Natural killer cell (primary cell): ENCODE measurements at regions of chr6 and their contacts with region 1.

Region 1: DNA sequence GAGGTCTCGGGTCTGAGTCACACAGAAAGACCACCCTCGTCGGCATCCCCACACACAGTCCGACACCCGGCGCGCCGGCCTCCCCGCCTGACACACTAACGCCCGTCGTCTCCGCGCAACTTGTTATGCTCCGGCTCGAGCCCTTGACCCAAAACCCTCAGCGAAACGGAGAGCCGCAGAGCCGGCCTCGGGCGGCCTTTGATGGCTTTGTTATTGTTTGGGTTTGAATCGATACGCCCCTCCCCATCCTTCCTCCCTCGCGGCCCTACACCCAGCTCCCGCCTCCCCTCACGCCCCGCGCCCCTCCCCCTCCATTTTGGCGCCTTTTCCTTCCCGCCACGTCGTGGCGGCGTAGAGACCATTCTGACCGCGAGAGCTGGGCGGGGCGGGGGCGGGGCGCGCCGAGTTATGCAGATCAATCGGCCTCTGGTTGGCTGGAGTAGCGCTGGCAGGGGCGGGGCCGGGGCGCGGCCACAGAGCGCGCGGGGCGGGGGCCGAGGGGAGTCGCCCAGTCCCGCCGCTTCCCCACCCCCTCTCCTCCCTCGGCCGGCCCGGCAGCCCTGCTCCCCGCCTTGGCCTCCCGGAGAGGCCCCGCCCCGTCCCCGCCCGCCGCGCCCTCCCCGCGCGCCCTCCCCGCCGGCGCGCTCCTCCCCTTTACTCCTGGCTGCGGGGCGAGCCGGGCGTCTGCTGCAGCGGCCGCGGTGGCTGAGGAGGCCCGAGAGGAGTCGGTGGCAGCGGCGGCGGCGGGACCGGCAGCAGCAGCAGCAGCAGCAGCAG is at the start of gene PIM1:
- DNase-seq: peak; percentile 90 to 98
- ATAC-seq: peak; percentile 79 to 95 (median 85)
- H3K4me3 ChIP-seq: peak within 1 kb of the TSS; percentile 92
- H3K4me3 Mint-ChIP-seq: peak within 1 kb of the TSS; percentile 99
- H3K27ac ChIP-seq: peak within 1 kb of the TSS; percentile 75
- H3K27ac Mint-ChIP-seq: peak within 1 kb of the TSS; percentile 95 to 99
- H3K4me1 ChIP-seq: peaks cover 39% of the 10 kb centered on the region
- H3K4me1 Mint-ChIP-seq: peaks cover 41 to 47% of the 10 kb centered on the region in 2 donors
- H3K27me3 ChIP-seq: no peaks in the 10 kb centered on the region
- H3K27me3 Mint-ChIP-seq: no peaks in the 10 kb centered on the region
- CTCF ChIP-seq: no peak
- total RNA-seq, gene PIM1: 188 to 242 (median 215) TPM

Region 2: DNA sequence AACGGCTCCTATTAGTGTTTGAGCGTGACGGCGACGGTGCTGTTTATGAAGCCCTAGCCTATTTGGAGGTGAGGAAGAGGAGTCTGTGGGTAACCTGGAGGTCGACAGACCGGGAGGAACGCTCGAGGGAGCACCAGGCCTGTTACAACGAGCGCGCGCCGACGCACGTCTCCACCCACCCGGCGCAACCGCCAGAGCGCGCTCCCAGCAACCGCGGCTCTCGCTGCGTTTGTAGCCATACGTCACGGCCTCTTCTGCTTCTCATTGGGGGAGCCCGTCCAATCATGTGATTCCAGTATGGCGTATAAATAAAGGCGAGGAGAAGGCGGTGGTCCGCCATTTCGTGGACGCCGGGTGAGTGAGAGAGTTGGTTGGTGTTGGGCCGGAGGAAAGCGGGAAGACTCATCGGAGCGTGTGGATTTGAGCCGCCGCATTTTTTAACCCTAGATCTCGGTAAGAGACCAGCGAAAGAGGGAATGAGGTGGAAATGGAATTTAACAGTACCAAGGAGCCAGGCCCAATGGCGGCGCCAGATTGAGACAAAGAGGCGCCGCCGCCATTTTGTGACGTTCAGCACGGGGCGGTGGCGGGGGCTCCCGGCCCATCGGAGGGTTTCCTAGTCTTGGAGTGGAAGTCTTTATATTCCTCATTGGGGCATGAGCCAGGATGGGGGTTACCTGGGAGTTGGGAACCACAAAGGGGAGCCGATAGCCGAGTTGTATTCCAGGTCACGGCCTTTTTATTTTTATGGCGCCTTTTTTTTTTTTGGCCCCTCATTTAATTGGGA is 575.5 kb before region 1 on chr6 and contains the start of gene SRSF3:
- intact Hi-C with region 1: loop called (anchors 10 kb)
- DNase-seq: peak; percentile 95 to 99
- ATAC-seq: peak; percentile 80 to 96 (median 87)
- H3K4me3 ChIP-seq: peak within 1 kb of the TSS; percentile 82
- H3K4me3 Mint-ChIP-seq: peak within 1 kb of the TSS; percentile 94
- H3K27ac ChIP-seq: peak within 1 kb of the TSS; percentile 98
- H3K27ac Mint-ChIP-seq: peak within 1 kb of the TSS; percentile 97 to 99
- H3K4me1 ChIP-seq: peaks cover 52% of the 10 kb centered on the region
- H3K4me1 Mint-ChIP-seq: peaks cover 59 to 60% of the 10 kb centered on the region in 2 donors
- H3K27me3 ChIP-seq: no peaks in the 10 kb centered on the region
- H3K27me3 Mint-ChIP-seq: peaks cover 0 to 2% of the 10 kb centered on the region in 2 donors
- CTCF ChIP-seq: no peak
- total RNA-seq, gene SRSF3: 445 to 526 (median 447) TPM

Region 3: GRCh38 chr6:36885461-36886401 is 284.0 kb before region 1 on chr6 and contains the start of gene C6orf89:
- intact Hi-C with region 1: loop called (anchors 1 kb)
- DNase-seq: peak; percentile 93 to 99
- ATAC-seq: peak; percentile 97 to 100 (median 98)
- H3K4me3 ChIP-seq: peak within 1 kb of the TSS; percentile 77
- H3K4me3 Mint-ChIP-seq: peak within 1 kb of the TSS; percentile 93
- H3K27ac ChIP-seq: peak within 1 kb of the TSS; percentile 73
- H3K27ac Mint-ChIP-seq: peak within 1 kb of the TSS; percentile 89 to 91
- H3K4me1 ChIP-seq: peaks cover 7% of the 10 kb centered on the region
- H3K4me1 Mint-ChIP-seq: peaks cover 28 to 33% of the 10 kb centered on the region in 2 donors
- H3K27me3 ChIP-seq: no peaks in the 10 kb centered on the region
- H3K27me3 Mint-ChIP-seq: no peaks in the 10 kb centered on the region
- CTCF ChIP-seq: peak; percentile 79
- total RNA-seq, gene C6orf89: 34.3 to 47.0 (median 46.3) TPM

Region 4: DNA sequence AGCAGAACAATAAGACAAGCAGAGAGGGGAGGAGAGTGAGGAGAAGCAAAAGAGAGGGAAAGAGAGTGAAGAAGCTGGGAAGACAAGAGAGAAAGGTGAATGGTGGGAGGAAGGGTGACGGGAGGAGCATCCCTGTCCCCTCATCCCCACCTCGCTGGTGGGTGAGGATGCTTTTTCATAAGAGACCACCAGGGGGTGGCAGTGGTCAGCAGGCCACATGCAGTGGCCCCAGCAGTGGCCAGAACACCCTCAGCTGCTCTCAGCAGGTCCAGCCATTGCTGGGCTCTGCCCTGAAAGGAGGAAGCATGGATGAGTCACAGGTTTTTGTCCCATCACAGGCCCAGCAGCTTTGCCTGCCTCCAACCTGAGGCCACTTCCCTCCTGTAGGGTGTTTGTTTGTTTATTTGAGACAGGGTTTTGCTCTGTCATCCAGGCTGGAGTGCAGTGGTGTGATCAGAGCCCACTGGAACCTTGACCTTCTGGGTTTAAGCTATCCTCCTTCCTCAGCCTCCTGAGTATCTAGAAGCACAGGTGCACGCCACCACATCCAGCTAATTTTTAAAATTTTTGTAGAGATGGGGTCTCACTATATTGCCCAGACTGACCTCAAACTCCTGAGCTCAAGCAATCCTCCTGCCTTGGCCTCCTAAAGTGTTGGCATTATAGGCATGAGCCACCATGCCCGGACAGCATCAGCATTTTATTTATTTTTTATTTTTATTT is 140.3 kb before region 1 on chr6:
- intact Hi-C with region 1: loop called (anchors 1 kb)
- DNase-seq: peak; percentile 56 to 71
- ATAC-seq: peak; percentile 56 to 94 (median 63)
- H3K4me3 ChIP-seq: no peak overlapping the region
- H3K4me3 Mint-ChIP-seq: no peak overlapping the region
- H3K27ac ChIP-seq: no peak overlapping the region
- H3K27ac Mint-ChIP-seq: peak overlapping the region; percentile 63 to 71
- H3K4me1 ChIP-seq: peaks cover 59% of the 10 kb centered on the region
- H3K4me1 Mint-ChIP-seq: peaks cover 45 to 63% of the 10 kb centered on the region in 2 donors
- H3K27me3 ChIP-seq: no peaks in the 10 kb centered on the region
- H3K27me3 Mint-ChIP-seq: no peaks in the 10 kb centered on the region
- CTCF ChIP-seq: peak; percentile 78

Region 5: GRCh38 chr6:37051138-37052026 is 118.3 kb before region 1 on chr6:
- intact Hi-C with region 1: loop called (anchors 1 kb)
- DNase-seq: peak; percentile 88 to 94
- ATAC-seq: peak; percentile 53 to 80 (median 73)
- H3K4me3 ChIP-seq: no peak overlapping the region
- H3K4me3 Mint-ChIP-seq: peak overlapping the region; percentile 84
- H3K27ac ChIP-seq: peak overlapping the region; percentile 99
- H3K27ac Mint-ChIP-seq: peak overlapping the region; percentile 99 to 100
- H3K4me1 ChIP-seq: peaks cover 61% of the 10 kb centered on the region
- H3K4me1 Mint-ChIP-seq: peaks cover 60 to 63% of the 10 kb centered on the region in 2 donors
- H3K27me3 ChIP-seq: no peaks in the 10 kb centered on the region
- H3K27me3 Mint-ChIP-seq: no peaks in the 10 kb centered on the region
- CTCF ChIP-seq: peak; percentile 85

Region 6: GRCh38 chr6:37102279-37103168 is 67.2 kb before region 1 on chr6:
- intact Hi-C with region 1: loop called (anchors 5 kb)
- DNase-seq: peak; percentile 71 to 89
- ATAC-seq: peak; percentile 89 to 93 (median 93)
- H3K4me3 ChIP-seq: peak overlapping the region; percentile 29
- H3K4me3 Mint-ChIP-seq: peak overlapping the region; percentile 81
- H3K27ac ChIP-seq: peak overlapping the region; percentile 64
- H3K27ac Mint-ChIP-seq: peak overlapping the region; percentile 80 to 91
- H3K4me1 ChIP-seq: peaks cover 23% of the 10 kb centered on the region
- H3K4me1 Mint-ChIP-seq: peaks cover 22 to 25% of the 10 kb centered on the region in 2 donors
- H3K27me3 ChIP-seq: no peaks in the 10 kb centered on the region
- H3K27me3 Mint-ChIP-seq: no peaks in the 10 kb centered on the region
- CTCF ChIP-seq: no peak

Region 7: GRCh38 chr6:37207903-37208456 is 38.3 kb after region 1 on chr6:
- intact Hi-C with region 1: loop called (anchors 1 kb)
- DNase-seq: peak; percentile 83 to 91
- ATAC-seq: peak; percentile 91
- H3K4me3 ChIP-seq: no peak overlapping the region
- H3K4me3 Mint-ChIP-seq: peak overlapping the region; percentile 28
- H3K27ac ChIP-seq: peak overlapping the region; percentile 37
- H3K27ac Mint-ChIP-seq: peak overlapping the region; percentile 59 to 82
- H3K4me1 ChIP-seq: peaks cover 50% of the 10 kb centered on the region
- H3K4me1 Mint-ChIP-seq: peaks cover 51 to 54% of the 10 kb centered on the region in 2 donors
- H3K27me3 ChIP-seq: no peaks in the 10 kb centered on the region
- H3K27me3 Mint-ChIP-seq: no peaks in the 10 kb centered on the region
- CTCF ChIP-seq: peak; percentile 92

Region 8: GRCh38 chr6:37456816-37457560 is 287.3 kb after region 1 on chr6:
- intact Hi-C with region 1: no loop called
- DNase-seq: no peak
- ATAC-seq: no peak
- H3K4me3 ChIP-seq: no peak overlapping the region
- H3K4me3 Mint-ChIP-seq: no peak overlapping the region
- H3K27ac ChIP-seq: no peak overlapping the region
- H3K27ac Mint-ChIP-seq: no peak overlapping the region
- H3K4me1 ChIP-seq: no peaks in the 10 kb centered on the region
- H3K4me1 Mint-ChIP-seq: peaks cover 15 to 22% of the 10 kb centered on the region in 2 donors
- H3K27me3 ChIP-seq: no peaks in the 10 kb centered on the region
- H3K27me3 Mint-ChIP-seq: no peaks in the 10 kb centered on the region
- CTCF ChIP-seq: no peak